B cell (primary cell): ENCODE measurements at regions of chr1 and their contacts with region 1.

Region 1: DNA sequence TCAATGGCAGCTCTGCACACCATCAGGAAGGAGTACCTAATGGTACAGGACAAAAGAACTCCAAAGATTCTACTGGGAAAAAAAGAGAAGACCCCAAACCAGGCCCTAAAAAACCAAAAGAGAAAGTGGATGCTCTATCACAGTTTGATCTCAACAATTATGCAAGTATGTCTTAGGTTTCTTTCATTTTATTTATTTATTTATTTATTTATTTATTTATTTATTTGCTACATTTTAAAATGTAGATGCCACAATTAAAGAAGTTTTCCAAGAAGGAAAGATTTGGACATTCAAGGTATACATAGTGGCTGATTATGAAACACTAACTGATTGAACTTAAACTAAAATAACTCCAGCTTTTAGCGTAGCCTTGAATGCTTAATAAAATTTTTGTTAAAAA is 60.2 kb downstream of the PRRC2C start:
- DNase-seq: no peak
- ATAC-seq: no peak
- H3K4me3 ChIP-seq: no peak overlapping the region
- H3K4me3 Mint-ChIP-seq: no peak overlapping the region
- H3K27ac ChIP-seq: peak overlapping the region in 1 of 2 donors; percentile 31
- H3K27ac Mint-ChIP-seq: no peak overlapping the region
- H3K4me1 ChIP-seq: no peaks in the 10 kb centered on the region
- H3K4me1 Mint-ChIP-seq: no peaks in the 10 kb centered on the region
- H3K27me3 ChIP-seq: no peaks in the 10 kb centered on the region
- H3K27me3 Mint-ChIP-seq: no peaks in the 10 kb centered on the region
- CTCF ChIP-seq: no peak

Region 2: DNA sequence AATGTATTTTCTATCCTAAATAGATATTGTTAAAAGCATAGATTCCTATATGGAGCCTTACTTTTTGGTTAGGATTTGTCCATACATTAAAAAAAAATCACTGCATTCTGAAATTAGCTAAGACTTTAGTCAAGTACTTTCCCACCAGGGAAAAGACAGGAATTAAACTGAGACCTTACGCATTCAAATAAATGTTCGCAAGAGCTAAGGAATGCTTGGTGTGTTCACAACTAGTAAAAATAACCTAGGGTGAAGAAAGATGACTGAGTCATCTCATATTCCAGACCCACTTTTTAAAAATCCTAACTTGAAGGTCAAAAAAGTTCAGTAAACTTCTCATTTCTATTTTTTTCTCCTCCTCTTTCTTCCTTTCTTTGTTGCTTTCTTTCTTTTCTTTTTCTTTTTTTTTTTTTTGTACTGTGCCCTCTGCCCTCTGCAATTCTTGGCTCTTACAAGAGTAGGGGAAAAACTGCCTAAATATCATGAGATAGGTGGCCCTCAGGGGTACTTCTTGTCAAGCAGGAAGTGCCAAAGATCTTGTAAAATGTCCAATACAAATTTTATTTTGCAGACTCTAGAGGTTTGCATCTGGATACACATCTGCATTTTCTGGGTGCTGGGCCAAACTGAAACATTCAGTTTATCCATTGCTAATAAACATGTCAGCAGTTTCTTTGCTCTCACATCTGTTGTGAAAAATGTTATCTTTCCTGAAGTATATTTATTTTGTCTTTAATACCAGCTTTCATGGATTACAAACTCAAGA is 1134.9 kb before region 1 on chr1:
- CTCF ChIA-PET with region 1: no interaction called
- POLR2A ChIA-PET with region 1: no interaction called
- intact Hi-C with region 1: no loop called
- DNase-seq: no peak
- ATAC-seq: no peak
- H3K4me3 ChIP-seq: no peak overlapping the region
- H3K4me3 Mint-ChIP-seq: no peak overlapping the region
- H3K27ac ChIP-seq: no peak overlapping the region
- H3K27ac Mint-ChIP-seq: no peak overlapping the region
- H3K4me1 ChIP-seq: no peaks in the 10 kb centered on the region
- H3K4me1 Mint-ChIP-seq: no peaks in the 10 kb centered on the region
- H3K27me3 ChIP-seq: no peaks in the 10 kb centered on the region
- H3K27me3 Mint-ChIP-seq: no peaks in the 10 kb centered on the region
- CTCF ChIP-seq: no peak

Region 3: GRCh38 chr1:171485375-171486047 is 60.0 kb before region 1 on chr1 and contains the start of gene PRRC2C:
- CTCF ChIA-PET with region 1: no interaction called
- POLR2A ChIA-PET with region 1: no interaction called
- intact Hi-C with region 1: no loop called
- DNase-seq: peak; percentile 97
- ATAC-seq: peak; percentile 92
- H3K4me3 ChIP-seq: peak within 1 kb of the TSS; percentile 97 to 100 (median 99)
- H3K4me3 Mint-ChIP-seq: peak within 1 kb of the TSS; percentile 93
- H3K27ac ChIP-seq: peak within 1 kb of the TSS; percentile 99 to 100
- H3K27ac Mint-ChIP-seq: peak within 1 kb of the TSS; percentile 94
- H3K4me1 ChIP-seq: peaks cover 25 to 47% of the 10 kb centered on the region in 2 donors
- H3K4me1 Mint-ChIP-seq: peaks cover 47% of the 10 kb centered on the region
- H3K27me3 ChIP-seq: no peaks in the 10 kb centered on the region
- H3K27me3 Mint-ChIP-seq: no peaks in the 10 kb centered on the region
- CTCF ChIP-seq: peak; percentile 83
- total RNA-seq, gene PRRC2C: 300 and 305 TPM in 2 replicates

Region 4: DNA sequence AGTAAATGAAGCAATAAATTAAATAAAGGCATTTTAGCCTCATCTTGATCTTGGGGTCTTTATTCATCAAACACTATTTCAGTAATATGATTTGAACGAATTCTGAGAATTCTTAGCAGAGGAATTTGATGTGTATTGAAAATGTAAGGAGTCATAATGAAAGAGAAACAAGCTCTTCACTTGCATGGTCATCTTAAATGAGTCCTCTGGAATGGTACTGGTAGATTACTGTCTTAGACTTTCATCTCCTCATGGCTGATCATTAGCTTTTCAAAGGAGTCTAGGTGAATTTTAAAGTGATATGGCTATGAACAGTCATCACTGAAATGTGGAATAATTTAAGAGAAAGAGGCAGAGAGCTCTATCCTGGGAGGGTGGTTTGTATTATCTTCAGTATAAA is 30.2 kb before region 1 on chr1:
- CTCF ChIA-PET with region 1: no interaction called
- POLR2A ChIA-PET with region 1: no interaction called
- intact Hi-C with region 1: no loop called
- DNase-seq: no peak
- ATAC-seq: no peak
- H3K4me3 ChIP-seq: no peak overlapping the region
- H3K4me3 Mint-ChIP-seq: no peak overlapping the region
- H3K27ac ChIP-seq: peak overlapping the region in 1 of 2 donors; percentile 19
- H3K27ac Mint-ChIP-seq: no peak overlapping the region
- H3K4me1 ChIP-seq: peaks cover 0 to 4% of the 10 kb centered on the region in 2 donors
- H3K4me1 Mint-ChIP-seq: peaks cover 18% of the 10 kb centered on the region
- H3K27me3 ChIP-seq: no peaks in the 10 kb centered on the region
- H3K27me3 Mint-ChIP-seq: no peaks in the 10 kb centered on the region
- CTCF ChIP-seq: no peak

Region 5: DNA sequence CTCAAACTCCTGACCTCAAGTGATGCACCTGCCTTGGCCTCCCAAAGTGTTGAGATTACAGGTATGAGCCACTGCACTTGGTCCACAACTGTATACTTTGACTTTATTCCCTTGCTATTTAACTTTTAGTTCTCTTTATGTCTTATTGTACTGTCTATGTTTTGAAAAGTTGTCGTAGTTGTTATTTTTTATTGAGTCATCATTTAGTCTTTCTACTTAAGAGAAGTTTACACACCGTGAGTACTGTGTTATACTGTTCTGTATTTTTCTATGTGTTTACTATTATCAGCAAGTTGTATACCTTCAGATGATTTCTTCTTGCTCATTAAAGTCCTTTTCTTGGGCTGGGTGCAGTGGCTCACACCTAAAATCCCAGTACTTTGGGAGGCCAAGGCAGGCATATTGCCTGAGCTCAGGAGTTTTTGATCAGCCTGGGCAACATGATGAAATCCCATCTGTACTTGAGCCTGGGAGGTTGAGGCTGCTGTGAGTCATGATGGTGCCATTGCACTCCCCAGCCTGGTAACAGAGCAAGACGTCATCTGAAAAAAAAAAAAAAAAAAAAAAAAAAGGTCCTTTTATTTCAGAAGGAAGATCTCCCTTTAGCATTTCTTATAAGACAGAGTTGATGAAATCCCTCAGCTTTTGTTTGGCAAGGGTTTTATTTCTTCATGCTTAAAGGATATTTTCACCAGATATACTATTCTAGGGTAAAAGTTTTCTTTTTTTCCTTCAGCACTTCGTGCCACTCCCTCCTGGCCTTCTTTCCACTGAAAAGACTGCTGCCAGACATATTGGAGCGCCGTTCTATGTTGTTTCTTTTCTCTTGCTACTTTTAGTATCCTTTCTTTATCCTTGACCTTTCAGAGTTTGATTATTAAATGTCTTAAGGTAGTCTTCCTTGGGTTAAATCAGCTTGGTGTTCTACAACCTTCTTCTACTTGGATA is 1457.6 kb after region 1 on chr1:
- CTCF ChIA-PET with region 1: no interaction called
- POLR2A ChIA-PET with region 1: interaction called, 10 read pairs
- intact Hi-C with region 1: no loop called
- DNase-seq: no peak
- ATAC-seq: no peak
- H3K4me3 ChIP-seq: no peak overlapping the region
- H3K4me3 Mint-ChIP-seq: no peak overlapping the region
- H3K27ac ChIP-seq: no peak overlapping the region
- H3K27ac Mint-ChIP-seq: no peak overlapping the region
- H3K4me1 ChIP-seq: no peaks in the 10 kb centered on the region
- H3K4me1 Mint-ChIP-seq: no peaks in the 10 kb centered on the region
- H3K27me3 ChIP-seq: no peaks in the 10 kb centered on the region
- H3K27me3 Mint-ChIP-seq: no peaks in the 10 kb centered on the region
- CTCF ChIP-seq: no peak